ENCODE measurements at regions of chr11 and their contacts with region 1.

Region 1: DNA sequence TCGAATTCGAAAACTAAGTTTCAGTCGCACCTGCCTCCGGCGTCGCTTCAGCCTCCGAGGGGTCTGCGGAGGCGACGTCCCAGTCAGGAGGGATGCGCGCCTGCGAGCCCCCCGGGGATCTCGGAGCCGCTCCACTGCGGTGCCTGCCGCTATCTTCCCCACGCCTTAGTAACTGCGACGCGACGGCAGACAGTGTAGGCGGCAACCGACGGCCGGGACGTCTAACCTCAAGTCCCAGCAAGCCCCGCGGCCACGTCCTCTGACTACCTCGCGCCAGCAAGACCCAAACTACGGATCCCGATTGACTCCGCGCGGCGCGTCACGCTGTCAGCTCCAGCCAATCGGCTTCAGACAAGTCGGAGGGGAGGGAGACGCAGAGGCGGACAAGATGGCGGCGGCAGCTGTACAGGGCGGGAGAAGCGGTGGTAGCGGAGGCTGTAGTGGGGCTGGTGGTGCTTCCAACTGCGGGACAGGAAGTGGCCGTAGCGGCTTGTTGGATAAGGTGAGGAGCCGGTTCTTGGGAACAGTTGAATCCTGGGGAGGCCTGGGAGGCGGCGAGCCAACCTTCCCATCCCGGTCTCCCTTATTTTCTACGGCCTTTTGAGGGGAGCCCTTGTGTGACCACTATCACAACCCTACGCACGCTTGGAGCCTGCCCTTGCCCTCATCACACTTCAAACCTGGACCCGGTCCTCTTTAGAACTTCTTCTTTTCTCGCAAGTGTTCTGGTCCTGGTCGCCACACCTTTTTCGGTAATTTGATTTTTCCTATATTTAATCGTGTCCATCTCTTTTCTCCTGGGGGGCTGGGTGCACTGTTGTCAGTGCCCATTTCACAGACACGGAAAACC is at the starts of genes SPCS2 and XRRA1:
- DNase-seq: peak; percentile 87 to 98 (median 97)
- ATAC-seq: peak; percentile 99
- H3K4me3 ChIP-seq: peak within 1 kb of the TSS; percentile 99
- H3K4me3 Mint-ChIP-seq: peak within 1 kb of the TSS; percentile 95 to 99 (median 96)
- H3K27ac ChIP-seq: peak within 1 kb of the TSS; percentile 78
- H3K27ac Mint-ChIP-seq: peak within 1 kb of the TSS; percentile 85 to 99 (median 96)
- H3K4me1 ChIP-seq: peaks cover 16 to 21% of the 10 kb centered on the region in 2 donors
- H3K4me1 Mint-ChIP-seq: peaks cover 30 to 86% (median 55%) of the 10 kb centered on the region in 7 donors
- H3K27me3 ChIP-seq: no peaks in the 10 kb centered on the region
- H3K27me3 Mint-ChIP-seq: no peaks in the 10 kb centered on the region
- total RNA-seq, gene SPCS2: 53.9 to 211 (median 87.5) TPM
- total RNA-seq, gene XRRA1: 11.3 to 20.8 (median 20.3) TPM

Region 2: DNA sequence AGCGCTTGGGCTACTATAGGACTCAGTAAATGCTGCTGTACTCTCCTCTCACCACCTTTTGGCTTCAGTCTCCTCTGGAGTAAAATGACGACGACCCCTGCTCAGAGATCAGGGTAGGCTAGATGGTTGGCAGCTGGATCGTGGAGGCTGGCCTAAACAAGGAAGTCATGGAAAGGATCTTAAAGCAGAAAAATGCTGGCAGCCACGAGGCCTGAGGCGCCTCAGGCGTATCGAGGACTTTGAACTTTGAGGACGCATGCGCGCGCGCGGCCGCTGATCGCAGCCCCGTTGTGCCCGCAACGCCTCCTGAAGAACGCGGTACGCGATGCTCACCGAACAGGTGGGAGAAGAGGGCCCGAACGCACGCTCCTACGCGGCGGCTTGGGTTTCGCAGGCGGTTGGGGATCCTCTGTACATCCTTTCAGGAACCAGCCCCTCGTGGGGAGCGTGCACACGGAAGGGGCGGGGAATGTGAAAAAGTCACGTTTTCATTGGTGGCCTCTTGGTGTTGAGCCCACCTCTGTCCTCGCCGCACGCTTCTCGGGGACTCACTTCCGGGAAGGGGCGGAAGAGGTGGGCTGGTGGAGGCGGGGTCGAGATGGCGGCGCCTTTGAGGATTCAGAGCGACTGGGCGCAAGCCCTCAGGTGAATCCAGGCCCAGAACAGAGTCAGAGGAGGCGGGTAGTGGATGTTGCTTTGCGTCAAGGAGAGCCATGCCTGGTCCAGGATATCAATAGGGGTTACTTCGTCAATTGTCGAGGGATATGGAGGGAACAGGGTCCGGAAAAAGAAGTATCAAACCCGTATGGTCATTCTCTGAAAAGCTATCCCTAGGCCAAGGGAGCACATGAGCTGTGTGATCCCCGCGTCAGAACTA is 1072.5 kb before region 1 on chr11 and contains the starts of genes COA4 and PAAF1:
- CTCF ChIA-PET with region 1: no interaction called
- POLR2A ChIA-PET with region 1: no interaction called
- intact Hi-C with region 1: loop called in 1 of 2 experiments (anchors 2 kb)
- DNase-seq: peak; percentile 72 to 95 (median 94)
- ATAC-seq: peak; percentile 99
- H3K4me3 ChIP-seq: peak within 1 kb of the TSS; percentile 94
- H3K4me3 Mint-ChIP-seq: peak within 1 kb of the TSS; percentile 94 to 98 (median 96)
- H3K27ac ChIP-seq: peak within 1 kb of the TSS; percentile 88
- H3K27ac Mint-ChIP-seq: peak within 1 kb of the TSS; percentile 92 to 100 (median 97)
- H3K4me1 ChIP-seq: peaks cover 17 to 19% of the 10 kb centered on the region in 2 donors
- H3K4me1 Mint-ChIP-seq: peaks cover 20 to 55% (median 43%) of the 10 kb centered on the region in 7 donors
- H3K27me3 ChIP-seq: no peaks in the 10 kb centered on the region
- H3K27me3 Mint-ChIP-seq: no peaks in the 10 kb centered on the region
- total RNA-seq, gene COA4: 29.1 to 75.0 (median 58.2) TPM
- total RNA-seq, gene PAAF1: 12.4 to 22.7 (median 20.3) TPM

Region 3: DNA sequence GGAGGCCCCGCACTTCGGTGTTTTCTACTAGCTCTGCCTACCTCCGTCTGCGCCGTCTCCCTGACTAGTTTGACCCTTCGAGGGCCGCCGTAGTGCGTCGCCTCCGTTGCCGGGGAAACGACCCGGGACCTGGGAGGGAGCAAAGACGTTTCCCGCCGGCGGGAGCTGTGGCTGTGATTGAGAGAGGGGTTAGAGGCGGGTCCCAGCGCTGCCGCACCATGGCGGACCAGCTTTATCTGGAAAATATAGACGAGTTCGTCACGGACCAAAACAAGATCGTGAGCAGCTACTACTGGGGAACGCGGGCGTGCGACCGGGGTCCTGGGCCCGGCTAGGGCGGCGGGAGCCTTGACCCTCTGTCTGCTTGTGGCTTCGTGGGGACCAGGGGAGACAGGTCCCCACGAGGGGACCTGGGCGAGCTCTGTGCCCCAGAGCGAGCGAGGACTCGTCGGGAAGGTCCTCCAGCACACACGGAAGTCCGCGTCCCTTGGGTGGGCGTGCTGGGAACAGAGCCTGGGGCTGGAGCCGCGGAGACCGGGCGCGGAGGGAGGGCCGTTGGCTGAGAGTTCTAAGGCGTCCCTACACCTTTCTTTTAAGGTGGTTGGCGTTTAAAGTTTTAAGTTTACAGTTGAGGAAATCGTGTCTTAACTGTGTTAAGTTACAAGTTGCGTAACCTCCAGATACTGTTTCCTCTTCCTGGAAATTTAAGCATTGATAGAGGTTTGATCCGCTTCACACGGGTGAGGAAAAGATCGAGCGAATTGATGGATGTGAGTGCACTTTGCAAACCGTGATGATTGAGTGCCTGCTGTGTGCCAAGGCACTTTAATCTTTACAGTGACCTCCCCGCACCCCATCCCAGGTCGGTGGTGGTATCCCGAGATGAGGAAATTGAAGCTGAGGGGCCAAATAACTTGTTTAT is 356.4 kb before region 1 on chr11 and contains the start of gene POLD3:
- CTCF ChIA-PET with region 1: no interaction called
- POLR2A ChIA-PET with region 1: no interaction called
- intact Hi-C with region 1: loop called (anchors 1 to 2 kb)
- DNase-seq: peak; percentile 83 to 97 (median 94)
- ATAC-seq: peak; percentile 99
- H3K4me3 ChIP-seq: peak within 1 kb of the TSS; percentile 98
- H3K4me3 Mint-ChIP-seq: peak within 1 kb of the TSS; percentile 90 to 100 (median 92)
- H3K27ac ChIP-seq: peak within 1 kb of the TSS; percentile 96
- H3K27ac Mint-ChIP-seq: peak within 1 kb of the TSS; percentile 90 to 99 (median 95)
- H3K4me1 ChIP-seq: peaks cover 9% of the 10 kb centered on the region in 2 donors
- H3K4me1 Mint-ChIP-seq: peaks cover 7 to 33% (median 27%) of the 10 kb centered on the region in 7 donors
- H3K27me3 ChIP-seq: no peaks in the 10 kb centered on the region
- H3K27me3 Mint-ChIP-seq: peaks cover 0 to 5% (median 0%) of the 10 kb centered on the region in 5 donors
- total RNA-seq, gene POLD3: 8.0 to 40.8 (median 14.7) TPM

Region 4: GRCh38 chr11:74895340-74896116 is 53.6 kb before region 1 on chr11:
- CTCF ChIA-PET with region 1: no interaction called
- POLR2A ChIA-PET with region 1: no interaction called
- intact Hi-C with region 1: no loop called
- DNase-seq: no peak
- ATAC-seq: no peak
- H3K4me3 ChIP-seq: no peak overlapping the region
- H3K4me3 Mint-ChIP-seq: no peak overlapping the region
- H3K27ac ChIP-seq: no peak overlapping the region
- H3K27ac Mint-ChIP-seq: peak overlapping the region in 2 of 9 donors; percentile 7 to 54
- H3K4me1 ChIP-seq: no peaks in the 10 kb centered on the region
- H3K4me1 Mint-ChIP-seq: peaks cover 0 to 6% (median 0%) of the 10 kb centered on the region in 7 donors
- H3K27me3 ChIP-seq: no peaks in the 10 kb centered on the region
- H3K27me3 Mint-ChIP-seq: no peaks in the 10 kb centered on the region

Region 5: DNA sequence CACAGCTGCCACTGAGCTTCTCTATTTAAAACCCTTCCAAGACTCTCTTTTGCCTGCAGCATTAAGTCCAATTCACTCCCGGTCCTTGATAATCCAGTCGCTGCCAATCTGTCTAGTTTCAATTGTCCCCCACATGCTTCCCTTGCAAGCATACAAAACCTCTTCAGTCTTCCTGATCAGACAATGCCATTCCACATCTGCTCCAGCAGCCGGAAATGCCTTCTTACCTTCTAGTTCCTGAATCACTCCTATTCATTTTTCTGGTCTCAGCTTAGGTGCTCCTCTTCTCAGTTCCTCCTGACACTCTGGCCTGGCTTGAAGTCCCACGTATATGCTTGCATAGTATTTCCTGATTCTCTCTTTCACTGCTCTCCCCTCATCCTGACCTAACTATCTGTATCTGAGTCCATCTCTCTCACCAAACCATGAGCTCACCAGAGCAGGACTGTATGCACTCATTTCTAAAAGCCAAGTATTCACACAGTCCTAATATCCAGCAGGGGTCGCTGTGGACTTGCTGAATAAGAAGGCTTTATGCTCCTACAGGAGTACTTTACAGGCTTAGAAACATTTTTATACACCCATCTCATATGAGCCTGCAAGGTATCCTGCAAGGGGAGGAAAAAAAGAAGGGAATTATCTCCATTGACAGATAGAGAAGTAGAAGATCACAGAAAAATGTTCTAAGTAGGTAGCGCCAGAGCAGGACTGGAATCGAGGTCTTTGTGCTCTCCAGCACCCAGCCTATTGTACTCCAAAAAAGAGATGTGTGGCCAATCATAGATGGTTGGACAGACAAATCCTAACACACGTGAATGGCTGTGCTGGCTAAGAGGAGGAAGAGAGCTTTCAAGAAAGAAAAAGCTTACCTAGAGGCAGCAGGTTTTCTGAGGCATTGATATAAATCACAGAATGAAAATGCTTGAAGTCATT is 19.4 kb before region 1 on chr11:
- CTCF ChIA-PET with region 1: interaction called, 3 read pairs
- POLR2A ChIA-PET with region 1: no interaction called
- intact Hi-C with region 1: loop called in 1 of 2 experiments (anchors 2 kb)
- DNase-seq: peak; percentile 9 to 74 (median 59)
- ATAC-seq: peak; percentile 92
- H3K4me3 ChIP-seq: no peak overlapping the region
- H3K4me3 Mint-ChIP-seq: no peak overlapping the region
- H3K27ac ChIP-seq: no peak overlapping the region
- H3K27ac Mint-ChIP-seq: no peak overlapping the region
- H3K4me1 ChIP-seq: no peaks in the 10 kb centered on the region
- H3K4me1 Mint-ChIP-seq: peaks cover 0 to 36% (median 0%) of the 10 kb centered on the region in 7 donors
- H3K27me3 ChIP-seq: no peaks in the 10 kb centered on the region
- H3K27me3 Mint-ChIP-seq: no peaks in the 10 kb centered on the region

Region 6: DNA sequence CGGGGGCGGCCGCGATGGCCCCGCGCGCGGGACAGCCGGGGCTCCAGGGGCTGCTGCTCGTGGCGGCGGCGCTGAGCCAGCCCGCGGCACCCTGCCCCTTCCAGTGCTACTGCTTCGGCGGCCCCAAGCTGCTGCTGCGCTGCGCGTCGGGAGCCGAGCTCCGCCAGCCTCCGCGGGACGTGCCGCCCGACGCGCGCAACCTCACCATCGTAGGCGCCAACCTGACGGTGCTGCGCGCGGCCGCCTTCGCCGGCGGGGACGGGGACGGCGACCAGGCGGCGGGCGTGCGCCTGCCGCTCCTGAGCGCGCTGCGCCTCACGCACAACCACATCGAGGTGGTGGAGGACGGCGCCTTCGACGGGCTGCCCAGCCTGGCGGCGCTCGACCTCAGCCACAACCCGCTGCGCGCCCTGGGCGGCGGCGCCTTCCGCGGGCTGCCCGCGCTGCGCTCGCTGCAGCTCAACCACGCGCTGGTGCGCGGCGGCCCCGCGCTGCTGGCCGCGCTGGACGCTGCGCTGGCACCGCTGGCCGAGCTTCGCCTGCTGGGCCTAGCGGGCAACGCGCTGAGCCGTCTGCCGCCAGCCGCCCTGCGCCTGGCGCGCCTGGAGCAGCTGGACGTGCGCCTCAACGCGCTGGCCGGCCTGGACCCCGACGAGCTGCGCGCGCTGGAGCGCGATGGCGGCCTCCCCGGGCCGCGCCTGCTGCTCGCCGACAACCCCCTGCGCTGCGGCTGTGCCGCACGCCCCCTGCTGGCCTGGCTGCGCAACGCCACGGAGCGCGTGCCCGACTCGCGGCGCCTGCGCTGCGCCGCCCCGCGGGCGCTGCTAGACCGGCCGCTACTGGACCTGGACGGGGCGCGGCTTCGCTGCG is 292.1 kb after region 1 on chr11:
- CTCF ChIA-PET with region 1: no interaction called
- POLR2A ChIA-PET with region 1: no interaction called
- intact Hi-C with region 1: loop called (anchors 1 to 5 kb)
- DNase-seq: peak; percentile 71 to 95 (median 86)
- ATAC-seq: peak; percentile 98
- H3K4me3 ChIP-seq: peak overlapping the region; percentile 54
- H3K4me3 Mint-ChIP-seq: peak overlapping the region; percentile 59 to 85 (median 75)
- H3K27ac ChIP-seq: no peak overlapping the region
- H3K27ac Mint-ChIP-seq: no peak overlapping the region
- H3K4me1 ChIP-seq: peaks cover 5 to 15% of the 10 kb centered on the region in 2 donors
- H3K4me1 Mint-ChIP-seq: peaks cover 0 to 14% (median 10%) of the 10 kb centered on the region in 7 donors
- H3K27me3 ChIP-seq: peaks cover 3 to 5% of the 10 kb centered on the region in 2 donors
- H3K27me3 Mint-ChIP-seq: peaks cover 13 to 68% (median 27%) of the 10 kb centered on the region in 5 donors

Region 7: GRCh38 chr11:76444384-76445123 is 1495.4 kb after region 1 on chr11 and contains the start of gene EMSY:
- CTCF ChIA-PET with region 1: no interaction called
- POLR2A ChIA-PET with region 1: no interaction called
- intact Hi-C with region 1: loop called in 1 of 2 experiments (anchors 10 kb)
- DNase-seq: peak; percentile 73 to 95 (median 92)
- ATAC-seq: peak; percentile 96
- H3K4me3 ChIP-seq: peak within 1 kb of the TSS; percentile 95
- H3K4me3 Mint-ChIP-seq: peak within 1 kb of the TSS; percentile 91 to 99 (median 96)
- H3K27ac ChIP-seq: peak within 1 kb of the TSS; percentile 92
- H3K27ac Mint-ChIP-seq: peak within 1 kb of the TSS; percentile 91 to 98 (median 97)
- H3K4me1 ChIP-seq: peaks cover 12 to 19% of the 10 kb centered on the region in 2 donors
- H3K4me1 Mint-ChIP-seq: peaks cover 29 to 58% (median 44%) of the 10 kb centered on the region in 7 donors
- H3K27me3 ChIP-seq: no peaks in the 10 kb centered on the region
- H3K27me3 Mint-ChIP-seq: no peaks in the 10 kb centered on the region
- total RNA-seq, gene EMSY: 35.5 to 49.0 (median 40.0) TPM